Sciatic nerve (tissue), 2 donors: ENCODE measurements at regions of chr12 and their contacts with region 1.

Region 1: DNA sequence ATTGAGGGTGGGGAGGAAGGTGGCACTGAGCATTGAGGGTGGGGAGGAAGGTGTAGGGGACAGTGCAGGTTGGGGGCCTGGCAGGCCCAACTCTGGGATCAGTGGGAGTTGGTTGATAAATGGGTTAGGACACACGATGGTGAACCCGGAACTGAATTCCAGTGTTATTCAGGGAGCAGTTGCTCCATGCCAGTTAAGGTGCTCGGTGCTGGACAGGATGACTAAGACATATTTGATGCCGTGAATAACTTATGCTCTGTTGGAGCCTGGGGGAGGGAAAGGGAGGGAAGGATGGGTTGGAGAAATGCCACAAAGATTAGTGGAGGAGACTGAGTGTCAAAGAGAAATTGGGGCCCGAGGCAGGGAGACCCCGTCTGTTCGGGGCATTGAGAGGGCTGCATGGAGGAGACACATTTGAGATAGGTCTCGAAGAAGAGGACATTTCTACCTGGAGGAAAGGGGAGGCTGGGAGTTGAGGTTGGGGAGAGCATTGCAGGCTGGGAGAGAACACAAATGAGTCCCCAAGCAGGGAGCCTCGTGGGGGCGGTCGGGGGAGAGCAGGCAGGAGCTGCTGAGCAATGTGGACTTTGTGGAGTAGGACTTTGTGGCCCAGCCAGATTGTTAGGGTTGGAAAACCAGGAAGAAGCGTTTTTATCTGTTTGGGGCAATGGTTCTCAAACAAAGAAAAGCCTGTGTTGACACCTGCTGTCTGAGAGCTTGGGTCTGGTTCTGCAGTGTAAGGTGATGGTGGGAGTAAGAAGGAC is 65.3 kb downstream of the IQSEC3 start:
- DNase-seq: no peak
- ATAC-seq: no peak

Region 2: DNA sequence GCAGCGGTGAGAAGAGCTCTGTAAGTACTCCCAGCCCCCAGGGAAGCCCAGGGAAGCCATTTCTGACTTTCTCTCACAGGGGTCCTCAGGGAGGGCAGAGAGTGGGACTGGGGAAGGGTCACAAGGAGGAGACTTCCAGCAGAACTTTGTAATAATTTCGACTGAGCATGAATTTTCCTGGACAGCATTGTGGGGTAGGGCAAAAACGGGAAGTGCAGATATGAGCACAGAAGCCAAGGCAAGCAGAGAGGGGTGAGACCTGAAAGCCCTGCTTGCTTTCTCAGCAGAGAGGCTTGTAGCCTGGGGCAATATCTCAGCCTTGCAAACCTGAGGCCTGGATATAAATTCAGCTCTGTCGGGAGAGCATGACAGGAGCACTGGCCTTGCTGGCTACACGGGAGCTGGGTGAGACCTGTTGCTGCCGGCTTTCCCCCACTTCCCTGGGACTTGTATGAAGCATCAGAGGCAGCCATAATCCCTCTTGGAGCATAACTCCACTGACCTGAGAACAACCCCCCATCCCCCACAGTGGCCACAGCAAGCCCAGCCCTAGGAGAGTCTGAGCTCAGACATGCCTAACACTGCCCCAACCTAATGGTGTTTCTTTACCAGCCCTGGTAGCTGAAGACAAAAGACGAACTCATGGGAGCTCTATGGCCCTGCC is 75.1 kb before region 1 on chr12:
- intact Hi-C with region 1: no loop called
- DNase-seq: no peak
- ATAC-seq: peak; percentile 25

Region 3: DNA sequence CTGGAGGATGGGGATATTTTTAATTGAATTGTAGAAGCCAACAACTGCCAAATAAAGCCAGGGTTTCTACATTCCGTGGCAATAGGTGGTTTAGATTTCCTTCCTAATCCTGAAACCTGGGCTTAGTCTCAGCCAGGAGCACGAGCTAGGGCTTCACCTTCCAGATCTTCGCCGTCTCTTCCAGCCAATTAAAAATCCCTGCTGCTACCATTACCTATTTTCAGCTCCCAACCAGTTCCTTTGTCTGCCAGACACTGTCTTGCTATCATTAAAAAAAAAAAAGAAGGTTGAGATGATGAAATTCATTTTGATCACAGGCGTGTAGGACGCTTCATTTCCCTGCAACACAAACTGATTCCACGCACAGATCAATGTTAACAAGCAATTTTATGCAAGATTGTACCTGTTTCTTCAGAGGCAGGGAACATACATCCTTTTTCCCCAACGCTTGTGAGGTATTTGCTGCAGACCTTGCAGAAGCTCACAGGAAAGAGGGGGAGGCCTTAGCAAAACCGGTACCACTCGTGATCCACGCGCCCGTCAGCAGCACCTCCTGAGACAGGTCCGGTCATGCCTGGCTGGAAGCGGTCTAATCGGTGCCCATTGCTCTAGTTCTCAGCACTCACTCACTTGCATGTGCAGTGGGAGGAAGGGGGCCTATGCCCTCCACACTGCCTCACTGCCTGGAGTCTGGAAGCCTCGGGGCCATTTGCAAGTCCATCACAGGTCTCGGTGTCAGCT is 16.9 kb after region 1 on chr12:
- intact Hi-C with region 1: loop called (anchors 1 kb)
- DNase-seq: no peak
- ATAC-seq: no peak